Heart right ventricle (tissue), 16 donors: ENCODE measurements at regions of chr16 and their contacts with region 1.

Region 1: DNA sequence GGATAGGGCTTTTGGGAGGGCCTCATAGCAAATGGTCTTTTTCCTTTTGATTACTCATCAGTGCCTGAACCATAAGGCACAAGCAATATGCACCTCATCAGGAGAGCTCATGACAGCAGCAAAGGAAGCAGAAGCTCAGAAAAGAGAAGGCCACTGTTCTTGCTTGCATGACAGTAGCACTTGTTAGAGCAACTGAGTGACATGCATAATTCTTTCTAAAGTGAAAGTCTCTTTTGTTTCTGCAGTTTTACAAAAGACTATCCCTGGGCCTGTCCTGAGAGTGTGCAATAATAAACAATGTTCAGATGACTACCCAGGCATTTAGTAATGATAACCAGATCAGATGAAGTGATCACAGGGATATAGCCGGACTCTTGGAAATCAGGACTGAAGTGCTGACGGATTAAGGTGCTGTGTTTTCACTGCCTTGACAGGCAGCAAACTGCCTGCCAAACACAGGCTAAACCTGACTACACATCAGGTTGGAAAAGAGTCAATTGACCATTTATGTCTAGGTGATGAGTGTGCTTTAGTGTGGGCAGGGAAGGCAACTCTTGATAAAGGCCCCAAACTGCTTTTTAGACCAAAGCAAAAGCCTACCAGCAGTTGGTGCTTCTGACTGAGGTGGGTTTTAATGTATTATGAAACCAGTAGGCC is 1860.3 kb downstream of the TP53TG3F start:
- DNase-seq: no peak
- ATAC-seq: no peak
- H3K4me3 ChIP-seq: no peak overlapping the region
- H3K27ac ChIP-seq: no peak overlapping the region
- H3K4me1 ChIP-seq: no peaks in the 10 kb centered on the region
- H3K27me3 ChIP-seq: no peaks in the 10 kb centered on the region
- CTCF ChIP-seq: no peak

Region 2: GRCh38 chr16:35255186-35255803 is 64.4 kb before region 1 on chr16:
- intact Hi-C with region 1: loop called in 1 of 10 experiments (anchors 10 kb)
- DNase-seq: no peak
- ATAC-seq: no peak
- H3K4me3 ChIP-seq: no peak overlapping the region
- H3K27ac ChIP-seq: no peak overlapping the region
- H3K4me1 ChIP-seq: no peaks in the 10 kb centered on the region
- H3K27me3 ChIP-seq: no peaks in the 10 kb centered on the region
- CTCF ChIP-seq: no peak

Region 3: DNA sequence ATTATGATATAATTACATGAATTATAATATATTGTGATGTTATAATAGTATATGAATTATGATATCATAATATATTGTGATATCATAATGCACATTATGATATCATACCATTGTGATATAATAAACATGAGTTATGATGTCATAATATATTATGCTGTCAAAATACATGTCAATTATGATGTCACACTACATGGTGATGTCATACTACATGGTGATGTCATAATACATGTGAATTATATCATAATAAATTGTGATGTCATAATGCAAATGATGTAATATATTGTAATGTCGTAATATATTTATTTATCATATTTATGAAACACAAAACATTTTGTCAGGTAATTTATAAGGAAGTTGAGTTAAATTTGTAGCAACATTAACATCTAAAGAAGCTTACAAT is 89.8 kb after region 1 on chr16:
- intact Hi-C with region 1: loop called in 1 of 10 experiments (anchors 10 kb)
- DNase-seq: no peak
- ATAC-seq: no peak
- H3K4me3 ChIP-seq: no peak overlapping the region
- H3K27ac ChIP-seq: no peak overlapping the region
- H3K4me1 ChIP-seq: no peaks in the 10 kb centered on the region
- H3K27me3 ChIP-seq: no peaks in the 10 kb centered on the region
- CTCF ChIP-seq: no peak

Region 4: GRCh38 chr16:35651841-35652240 is 332.2 kb after region 1 on chr16:
- intact Hi-C with region 1: no loop called
- DNase-seq: no peak
- ATAC-seq: no peak
- H3K4me3 ChIP-seq: no peak overlapping the region
- H3K27ac ChIP-seq: no peak overlapping the region
- H3K4me1 ChIP-seq: no peaks in the 10 kb centered on the region
- H3K27me3 ChIP-seq: no peaks in the 10 kb centered on the region
- CTCF ChIP-seq: no peak